Mammary epithelial cell (primary cell): ENCODE measurements at regions of chr7 and their contacts with region 1.

Region 1: DNA sequence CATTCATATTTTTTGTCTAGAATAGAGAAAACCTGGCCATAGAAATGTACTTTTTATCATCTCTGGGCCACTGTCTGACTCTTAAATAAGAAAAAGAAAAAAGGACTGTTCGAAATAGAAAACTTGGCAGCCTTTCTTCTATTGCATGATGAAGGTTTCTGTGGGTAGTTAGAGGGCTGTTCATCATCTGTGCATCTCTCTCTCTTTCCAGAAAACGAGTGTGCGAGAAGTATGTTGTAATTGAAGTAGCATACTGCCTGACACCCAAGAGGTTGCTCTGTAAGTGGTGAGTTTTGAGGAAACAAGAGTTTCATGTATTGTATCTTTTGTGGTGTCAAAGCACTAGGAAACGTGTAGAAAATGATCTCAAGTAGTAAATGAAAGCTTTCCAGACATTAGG is 343.2 kb upstream of the TMEM229A start:
- DNase-seq: no peak
- H3K4me3 ChIP-seq: no peak overlapping the region
- H3K27ac ChIP-seq: no peak overlapping the region
- H3K4me1 ChIP-seq: no peaks in the 10 kb centered on the region
- H3K27me3 ChIP-seq: no peaks in the 10 kb centered on the region
- CTCF ChIP-seq: no peak

Region 2: DNA sequence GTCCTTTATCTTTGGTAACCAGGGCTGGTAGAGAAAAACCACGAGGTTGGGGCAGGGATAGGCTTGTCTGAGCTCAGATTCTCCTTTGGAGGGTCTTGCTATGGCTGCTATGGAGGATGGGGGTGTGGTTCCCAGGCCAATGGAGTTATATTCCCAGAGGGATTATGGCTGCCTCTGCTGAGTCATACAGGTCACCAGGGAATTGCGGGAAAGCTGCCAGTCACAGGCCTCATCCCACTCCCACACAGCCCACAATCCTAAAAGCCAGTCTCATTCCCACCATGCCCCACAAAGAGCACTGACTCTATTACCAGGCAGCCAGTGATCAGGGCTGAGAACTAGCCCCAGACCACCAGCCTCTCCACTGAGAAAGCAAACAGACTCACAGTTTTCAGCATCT is 26.7 kb before region 1 on chr7:
- CTCF ChIA-PET with region 1: no interaction called
- dilution Hi-C with region 1: loop called (anchors 5 kb)
- in situ Hi-C with region 1: no loop called
- intact Hi-C with region 1: no loop called
- DNase-seq: no peak
- H3K4me3 ChIP-seq: no peak overlapping the region
- H3K27ac ChIP-seq: no peak overlapping the region
- H3K4me1 ChIP-seq: no peaks in the 10 kb centered on the region
- H3K27me3 ChIP-seq: no peaks in the 10 kb centered on the region
- CTCF ChIP-seq: no peak

Region 3: DNA sequence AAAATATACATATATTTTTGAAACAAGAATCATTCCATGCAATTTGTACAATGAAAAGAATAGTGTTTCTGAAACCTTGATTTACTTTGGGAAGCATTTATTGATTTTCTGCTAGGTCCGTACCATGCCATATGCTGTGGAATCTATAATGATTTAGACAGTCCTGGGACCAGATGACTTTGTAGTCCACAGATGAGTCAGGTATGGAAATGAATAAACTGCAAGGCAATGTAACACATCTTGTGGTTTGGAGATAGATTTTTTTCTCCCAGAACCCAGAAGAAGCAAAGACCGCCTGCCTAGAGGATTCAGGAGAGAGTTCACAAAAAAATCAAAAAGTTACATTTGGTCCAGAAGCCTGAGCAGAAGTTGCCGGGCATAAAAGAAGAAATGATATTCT is 199.1 kb after region 1 on chr7:
- CTCF ChIA-PET with region 1: no interaction called
- dilution Hi-C with region 1: no loop called
- in situ Hi-C with region 1: no loop called
- intact Hi-C with region 1: no loop called
- DNase-seq: no peak
- H3K4me3 ChIP-seq: no peak overlapping the region
- H3K27ac ChIP-seq: no peak overlapping the region
- H3K4me1 ChIP-seq: no peaks in the 10 kb centered on the region
- H3K27me3 ChIP-seq: no peaks in the 10 kb centered on the region
- CTCF ChIP-seq: no peak